A549 (cell line): ENCODE measurements at regions of chr17 and their contacts with region 1.

Region 1: GRCh38 chr17:42843358-42843934 is 934 bp upstream of the AOC2 start:
- DNase-seq: peak; percentile 82 to 91
- ATAC-seq: peak; percentile 80 to 85
- H3K4me3 ChIP-seq: no peak overlapping the region
- H3K27ac ChIP-seq: no peak overlapping the region
- H3K4me1 ChIP-seq: no peaks in the 10 kb centered on the region
- CTCF ChIP-seq: peak; percentile 99
- EP300 ChIP-seq: no peak
- POLR2A ChIP-seq: no peak
- RAD21 ChIP-seq: peak; percentile 96 to 99

Region 2: GRCh38 chr17:42832974-42833766 is 10.3 kb before region 1 on chr17 and contains the start of gene PSME3:
- CTCF ChIA-PET with region 1: interaction called, 81 read pairs
- POLR2A ChIA-PET with region 1: interaction called, 5 read pairs
- DNase-seq: peak; percentile 92 to 96
- ATAC-seq: peak; percentile 96 to 97
- H3K4me3 ChIP-seq: peak within 1 kb of the TSS; percentile 94
- H3K27ac ChIP-seq: peak within 1 kb of the TSS; percentile 95 to 96
- H3K4me1 ChIP-seq: peaks cover 22% of the 10 kb centered on the region
- CTCF ChIP-seq: no peak
- EP300 ChIP-seq: no peak
- POLR2A ChIP-seq: peak; percentile 98
- RAD21 ChIP-seq: no peak; a peak in 1 of 5 replicates
- polyA plus RNA-seq, gene PSME3: 220 and 257 TPM in 2 replicates

Region 3: GRCh38 chr17:42886283-42887176 is 43.1 kb after region 1 on chr17:
- CTCF ChIA-PET with region 1: interaction called, 15 read pairs
- POLR2A ChIA-PET with region 1: no interaction called
- DNase-seq: no peak
- ATAC-seq: no peak
- H3K4me3 ChIP-seq: no peak overlapping the region
- H3K27ac ChIP-seq: no peak overlapping the region
- H3K4me1 ChIP-seq: peaks cover 6% of the 10 kb centered on the region; the same call in 2 of the 3 replicates
- CTCF ChIP-seq: no peak
- EP300 ChIP-seq: no peak
- POLR2A ChIP-seq: no peak
- RAD21 ChIP-seq: no peak

Region 4: GRCh38 chr17:42928714-42929496 is 85.5 kb after region 1 on chr17:
- CTCF ChIA-PET with region 1: interaction called, 372 read pairs
- POLR2A ChIA-PET with region 1: interaction called, 5 read pairs
- DNase-seq: peak; percentile 93 to 95
- ATAC-seq: peak; percentile 96 to 97
- H3K4me3 ChIP-seq: no peak overlapping the region
- H3K27ac ChIP-seq: peak overlapping the region; percentile 75 to 84
- H3K4me1 ChIP-seq: peaks cover 9% of the 10 kb centered on the region
- CTCF ChIP-seq: peak; percentile 74
- EP300 ChIP-seq: no peak
- POLR2A ChIP-seq: no peak
- RAD21 ChIP-seq: peak; percentile 82 to 84

Region 5: GRCh38 chr17:42953669-42954068 is 110.2 kb after region 1 on chr17:
- CTCF ChIA-PET with region 1: interaction called, 24 read pairs
- POLR2A ChIA-PET with region 1: no interaction called
- DNase-seq: no peak
- ATAC-seq: no peak; a peak in 1 of 6 replicates
- H3K4me3 ChIP-seq: no peak overlapping the region
- H3K27ac ChIP-seq: no peak overlapping the region
- H3K4me1 ChIP-seq: no peaks in the 10 kb centered on the region
- CTCF ChIP-seq: no peak
- EP300 ChIP-seq: no peak
- POLR2A ChIP-seq: no peak
- RAD21 ChIP-seq: no peak

Region 6: GRCh38 chr17:42997984-42998938 is 154.8 kb after region 1 on chr17 and contains the start of gene RPL27:
- CTCF ChIA-PET with region 1: interaction called, 33 read pairs
- POLR2A ChIA-PET with region 1: interaction called, 8 read pairs
- DNase-seq: peak; percentile 96 to 100
- ATAC-seq: peak; percentile 92 to 95
- H3K4me3 ChIP-seq: peak within 1 kb of the TSS; percentile 66
- H3K27ac ChIP-seq: peak within 1 kb of the TSS; percentile 87 to 91
- H3K4me1 ChIP-seq: peaks cover 45% of the 10 kb centered on the region
- CTCF ChIP-seq: peak; percentile 88
- EP300 ChIP-seq: no peak; a peak in 1 of 5 replicates
- POLR2A ChIP-seq: peak; percentile 88
- RAD21 ChIP-seq: peak; percentile 79 to 84
- polyA plus RNA-seq, gene RPL27: 5,588 and 5,746 TPM in 2 replicates